HepG2 (cell line): ENCODE measurements at regions of chr22 and their contacts with region 1.

Region 1: DNA sequence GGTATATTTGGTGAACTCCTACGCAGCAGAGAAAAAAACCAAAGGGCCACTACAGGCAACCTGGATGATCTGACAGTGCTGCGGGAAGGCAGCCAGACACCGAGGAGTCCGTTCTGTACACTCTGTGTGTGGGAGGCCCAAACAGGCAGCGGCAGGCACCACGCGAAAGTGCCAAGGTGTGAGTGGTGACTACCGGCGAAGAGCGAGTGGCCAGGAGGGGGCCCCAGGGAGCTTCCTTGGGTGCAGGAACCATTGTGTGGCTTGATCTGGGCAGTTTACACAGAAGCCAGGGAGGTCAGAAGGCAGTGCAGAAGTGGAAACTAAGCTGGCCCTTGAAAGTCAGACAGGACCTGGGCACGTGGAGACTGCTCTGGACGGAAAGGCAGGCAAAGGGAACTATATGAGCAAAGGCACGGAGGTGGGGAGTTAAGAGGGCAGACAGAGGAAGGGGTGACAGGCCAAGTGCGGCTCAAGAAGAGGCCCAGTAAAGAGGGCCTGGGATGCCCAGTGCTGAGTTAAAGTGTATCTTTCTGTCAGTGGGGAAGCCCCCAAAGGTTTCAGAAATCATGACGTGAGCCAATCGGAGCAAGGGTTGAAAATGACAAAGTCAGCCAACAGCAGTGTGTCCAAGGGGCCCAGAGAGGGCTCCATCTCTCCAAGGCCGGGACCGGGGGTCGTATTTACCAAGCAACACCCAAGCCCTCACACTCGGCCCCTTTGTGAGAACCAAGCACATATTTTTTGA is 10.6 kb downstream of the TMEM184B start:
- DNase-seq: peak; percentile 54
- ATAC-seq: peak; percentile 87
- H3K4me3 ChIP-seq: peak overlapping the region; percentile 15 to 53 (median 25); a peak in 3 of 6 replicates
- H3K27ac ChIP-seq: peak overlapping the region; percentile 73
- H3K4me1 ChIP-seq: peaks cover 63% of the 10 kb centered on the region
- H3K27me3 ChIP-seq: no peaks in the 10 kb centered on the region
- CTCF ChIP-seq: peak; percentile 91
- EP300 ChIP-seq: no peak
- POLR2A ChIP-seq: no peak
- RAD21 ChIP-seq: peak; percentile 80

Region 2: GRCh38 chr22:38114484-38115398 is 147.5 kb before region 1 on chr22:
- CTCF ChIA-PET with region 1: no interaction called
- POLR2A ChIA-PET with region 1: no interaction called
- in situ Hi-C with region 1: no loop called
- intact Hi-C with region 1: loop called (anchors 5 kb)
- DNase-seq: peak; percentile 38
- ATAC-seq: peak; percentile 66
- H3K4me3 ChIP-seq: no peak overlapping the region
- H3K27ac ChIP-seq: no peak overlapping the region
- H3K4me1 ChIP-seq: peaks cover 42% of the 10 kb centered on the region
- H3K27me3 ChIP-seq: no peaks in the 10 kb centered on the region
- CTCF ChIP-seq: peak; percentile 92
- EP300 ChIP-seq: no peak
- POLR2A ChIP-seq: no peak
- RAD21 ChIP-seq: peak; percentile 84

Region 3: GRCh38 chr22:38167988-38168431 is 94.2 kb before region 1 on chr22:
- CTCF ChIA-PET with region 1: no interaction called
- POLR2A ChIA-PET with region 1: no interaction called
- in situ Hi-C with region 1: no loop called
- intact Hi-C with region 1: no loop called
- DNase-seq: no peak
- ATAC-seq: no peak
- H3K4me3 ChIP-seq: no peak overlapping the region
- H3K27ac ChIP-seq: no peak overlapping the region
- H3K4me1 ChIP-seq: peaks cover 50% of the 10 kb centered on the region
- H3K27me3 ChIP-seq: no peaks in the 10 kb centered on the region
- CTCF ChIP-seq: no peak
- EP300 ChIP-seq: no peak
- POLR2A ChIP-seq: no peak
- RAD21 ChIP-seq: no peak